ENCODE measurements at regions of chr22 and their contacts with region 1.

Region 1: DNA sequence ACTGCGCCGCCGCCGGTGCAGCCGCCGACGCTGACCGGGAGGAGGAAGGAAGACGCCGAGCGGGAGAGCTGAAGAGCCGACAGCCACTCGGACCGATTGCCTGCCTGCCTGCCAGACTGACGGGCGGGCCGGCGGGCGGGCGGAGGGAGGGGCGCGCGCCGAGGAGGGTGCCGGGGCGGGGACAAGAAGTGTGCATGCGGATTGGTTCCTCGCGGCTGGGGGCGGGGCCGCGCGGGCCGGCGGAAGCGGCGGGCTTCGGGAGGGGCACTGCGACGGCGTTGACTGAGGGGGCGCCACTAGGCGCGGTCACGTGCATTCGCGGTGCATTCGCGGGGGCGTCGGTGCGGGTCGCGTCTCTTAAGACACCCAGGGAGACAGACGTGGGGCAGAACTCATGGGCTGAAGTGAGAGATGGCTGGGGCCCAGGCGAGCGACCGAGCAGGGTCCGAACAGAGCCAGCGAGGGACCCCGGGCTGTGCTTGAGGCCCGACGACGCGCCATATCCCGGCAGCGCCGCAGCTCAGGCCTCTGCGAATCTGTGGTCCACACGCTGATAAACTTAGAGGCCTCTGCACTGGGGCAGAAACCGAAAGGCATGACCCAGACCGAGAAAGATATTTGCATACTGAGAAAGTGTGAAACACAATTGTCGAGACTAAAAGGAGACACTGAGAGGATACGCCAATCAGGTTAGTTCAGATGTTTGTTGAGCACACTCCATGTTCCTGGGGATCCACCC is at the start of gene MAPK1:
- DNase-seq: peak; percentile 94
- ATAC-seq: peak; percentile 88
- H3K4me3 Mint-ChIP-seq: peak within 1 kb of the TSS; percentile 95
- H3K27ac Mint-ChIP-seq: peak within 1 kb of the TSS; percentile 100
- H3K4me1 Mint-ChIP-seq: peaks cover 50% of the 10 kb centered on the region
- H3K27me3 Mint-ChIP-seq: no peaks in the 10 kb centered on the region
- CTCF ChIP-seq: no peak
- total RNA-seq, gene MAPK1: 130 and 149 TPM in 2 replicates

Region 2: GRCh38 chr22:21666786-21667185 is 200.9 kb before region 1 on chr22:
- CTCF ChIA-PET with region 1: no interaction called
- POLR2A ChIA-PET with region 1: no interaction called
- intact Hi-C with region 1: loop called (anchors 5 kb)
- DNase-seq: no peak
- ATAC-seq: no peak
- H3K4me3 Mint-ChIP-seq: peak overlapping the region; percentile 99
- H3K27ac Mint-ChIP-seq: peak overlapping the region; percentile 50
- H3K4me1 Mint-ChIP-seq: peaks cover 25% of the 10 kb centered on the region
- H3K27me3 Mint-ChIP-seq: no peaks in the 10 kb centered on the region
- CTCF ChIP-seq: no peak

Region 3: GRCh38 chr22:21688706-21689381 is 178.9 kb before region 1 on chr22:
- CTCF ChIA-PET with region 1: no interaction called
- POLR2A ChIA-PET with region 1: no interaction called
- intact Hi-C with region 1: no loop called
- DNase-seq: no peak
- ATAC-seq: peak; percentile 71
- H3K4me3 Mint-ChIP-seq: no peak overlapping the region
- H3K27ac Mint-ChIP-seq: peak overlapping the region; percentile 70
- H3K4me1 Mint-ChIP-seq: peaks cover 14% of the 10 kb centered on the region
- H3K27me3 Mint-ChIP-seq: no peaks in the 10 kb centered on the region
- CTCF ChIP-seq: no peak

Region 4: GRCh38 chr22:21816787-21817496 is 50.8 kb before region 1 on chr22:
- CTCF ChIA-PET with region 1: no interaction called
- POLR2A ChIA-PET with region 1: interaction called, 6 read pairs
- intact Hi-C with region 1: loop called (anchors 1 kb)
- DNase-seq: peak; percentile 34
- ATAC-seq: peak; percentile 89
- H3K4me3 Mint-ChIP-seq: peak overlapping the region; percentile 81
- H3K27ac Mint-ChIP-seq: peak overlapping the region; percentile 96
- H3K4me1 Mint-ChIP-seq: peaks cover 80% of the 10 kb centered on the region
- H3K27me3 Mint-ChIP-seq: no peaks in the 10 kb centered on the region
- CTCF ChIP-seq: no peak

Region 5: GRCh38 chr22:21857481-21857914 is 10.2 kb before region 1 on chr22:
- CTCF ChIA-PET with region 1: interaction called, 3 read pairs
- POLR2A ChIA-PET with region 1: interaction called, 10 read pairs
- intact Hi-C with region 1: loop called (anchors 1 kb)
- DNase-seq: no peak
- ATAC-seq: peak; percentile 78
- H3K4me3 Mint-ChIP-seq: peak overlapping the region; percentile 1
- H3K27ac Mint-ChIP-seq: peak overlapping the region; percentile 46
- H3K4me1 Mint-ChIP-seq: peaks cover 91% of the 10 kb centered on the region
- H3K27me3 Mint-ChIP-seq: no peaks in the 10 kb centered on the region
- CTCF ChIP-seq: no peak

Region 6: DNA sequence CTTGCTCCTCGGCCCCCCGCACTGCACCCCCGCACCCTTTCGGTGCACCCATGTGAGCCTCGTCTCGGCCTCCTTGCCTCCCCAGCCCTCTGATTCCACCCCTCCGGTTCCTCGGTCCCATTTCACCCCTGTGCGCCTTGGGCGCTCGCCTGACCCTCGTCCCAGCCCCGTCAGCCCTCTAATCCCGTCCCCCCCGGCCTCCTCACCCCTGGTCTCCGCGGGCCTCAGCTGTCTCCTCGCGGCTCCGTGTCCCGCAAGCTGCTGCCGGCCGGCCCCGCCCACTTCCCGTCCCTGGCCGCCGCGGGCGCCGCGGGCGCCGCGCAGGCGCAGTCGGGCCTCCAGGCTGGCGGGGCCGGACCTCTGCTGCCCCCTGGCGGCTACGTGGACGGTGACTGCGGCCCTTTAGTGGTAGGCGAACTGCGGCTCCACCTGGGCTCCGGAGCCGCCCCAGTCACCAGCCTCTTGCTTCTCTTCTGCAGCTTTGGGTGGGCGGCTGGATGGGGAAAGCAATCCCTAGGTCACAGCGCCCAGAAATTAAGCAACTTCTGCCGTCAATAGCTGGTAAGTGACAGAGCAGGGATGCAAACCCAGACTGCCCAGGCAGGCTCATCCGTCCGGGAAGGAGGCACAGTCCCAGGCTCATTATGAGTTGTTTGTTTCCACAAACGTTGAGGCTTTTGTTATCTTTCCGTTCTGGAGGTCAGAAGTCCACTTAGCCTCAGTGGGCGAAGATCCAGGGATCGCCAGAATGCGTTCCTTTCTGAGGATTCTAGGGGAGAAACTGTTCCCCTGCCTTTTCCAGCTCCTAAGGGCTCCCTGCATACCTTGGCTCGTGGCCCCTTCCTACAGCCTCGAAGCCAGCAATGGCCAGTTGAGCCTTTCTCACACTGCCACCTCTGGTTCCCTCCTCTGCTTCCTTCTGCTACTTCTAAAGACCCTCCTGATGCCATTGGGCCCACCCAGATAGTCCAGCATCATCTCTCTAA is 85.2 kb after region 1 on chr22 and contains the start of gene PPM1F:
- CTCF ChIA-PET with region 1: no interaction called
- POLR2A ChIA-PET with region 1: no interaction called
- intact Hi-C with region 1: loop called (anchors 5 kb)
- DNase-seq: peak; percentile 98
- ATAC-seq: peak; percentile 86
- H3K4me3 Mint-ChIP-seq: peak within 1 kb of the TSS; percentile 93
- H3K27ac Mint-ChIP-seq: peak within 1 kb of the TSS; percentile 76
- H3K4me1 Mint-ChIP-seq: peaks cover 15% of the 10 kb centered on the region
- H3K27me3 Mint-ChIP-seq: no peaks in the 10 kb centered on the region
- CTCF ChIP-seq: no peak
- total RNA-seq, gene PPM1F: 18.2 and 21.1 TPM in 2 replicates

Measured in activated B cell treated with CpG ODN at 0.5 μM for 24 hours (primary cell).